Naive thymus-derived CD4-positive, alpha-beta T cell (primary cell): ENCODE measurements at regions of chr12 and their contacts with region 1.

Region 1: GRCh38 chr12:53675651-53676453 is at the start of gene ATP5MC2:
- DNase-seq: peak; percentile 92 to 98 (median 97)
- ATAC-seq: peak; percentile 97
- H3K4me3 ChIP-seq: peak within 1 kb of the TSS; percentile 64
- H3K4me3 Mint-ChIP-seq: peak within 1 kb of the TSS; percentile 91 to 99 (median 94)
- H3K27ac ChIP-seq: peak within 1 kb of the TSS; percentile 76
- H3K27ac Mint-ChIP-seq: peak within 1 kb of the TSS; percentile 91 to 98 (median 95)
- H3K4me1 ChIP-seq: peaks cover 7 to 21% of the 10 kb centered on the region in 2 donors
- H3K4me1 Mint-ChIP-seq: peaks cover 21 to 38% (median 32%) of the 10 kb centered on the region in 7 donors
- H3K27me3 ChIP-seq: no peaks in the 10 kb centered on the region
- H3K27me3 Mint-ChIP-seq: peaks cover 16 to 35% (median 21%) of the 10 kb centered on the region in 5 donors
- total RNA-seq, gene ATP5MC2: 237 to 332 (median 275) TPM

Region 2: GRCh38 chr12:53402871-53403270 is 273.0 kb before region 1 on chr12:
- CTCF ChIA-PET with region 1: no interaction called
- POLR2A ChIA-PET with region 1: no interaction called
- intact Hi-C with region 1: no loop called
- DNase-seq: no peak
- ATAC-seq: no peak
- H3K4me3 ChIP-seq: no peak overlapping the region
- H3K4me3 Mint-ChIP-seq: no peak overlapping the region
- H3K27ac ChIP-seq: no peak overlapping the region
- H3K27ac Mint-ChIP-seq: no peak overlapping the region
- H3K4me1 ChIP-seq: no peaks in the 10 kb centered on the region
- H3K4me1 Mint-ChIP-seq: peaks cover 4 to 17% (median 10%) of the 10 kb centered on the region in 7 donors
- H3K27me3 ChIP-seq: no peaks in the 10 kb centered on the region
- H3K27me3 Mint-ChIP-seq: no peaks in the 10 kb centered on the region

Region 3: GRCh38 chr12:53543539-53543938 is 132.3 kb before region 1 on chr12:
- CTCF ChIA-PET with region 1: interaction called, 37 read pairs
- POLR2A ChIA-PET with region 1: interaction called, 9 read pairs
- intact Hi-C with region 1: loop called (anchors 1 kb)
- DNase-seq: peak in 8 of 9 donors; percentile 37 to 78 (median 64)
- ATAC-seq: peak; percentile 94
- H3K4me3 ChIP-seq: no peak overlapping the region
- H3K4me3 Mint-ChIP-seq: peak overlapping the region in 5 of 10 donors; percentile 5 to 52 (median 33)
- H3K27ac ChIP-seq: peak overlapping the region; percentile 26
- H3K27ac Mint-ChIP-seq: peak overlapping the region; percentile 51 to 88 (median 76)
- H3K4me1 ChIP-seq: peaks cover 0 to 7% of the 10 kb centered on the region in 2 donors
- H3K4me1 Mint-ChIP-seq: peaks cover 0 to 25% (median 18%) of the 10 kb centered on the region in 7 donors
- H3K27me3 ChIP-seq: no peaks in the 10 kb centered on the region
- H3K27me3 Mint-ChIP-seq: no peaks in the 10 kb centered on the region

Region 4: GRCh38 chr12:53625946-53626701 is 49.7 kb before region 1 on chr12 and contains the start of gene ATF7:
- CTCF ChIA-PET with region 1: interaction called, 5 read pairs
- POLR2A ChIA-PET with region 1: interaction called, 10 read pairs
- intact Hi-C with region 1: loop called (anchors 1 kb)
- DNase-seq: peak; percentile 95 to 100 (median 99)
- ATAC-seq: peak; percentile 97
- H3K4me3 ChIP-seq: peak within 1 kb of the TSS; percentile 92
- H3K4me3 Mint-ChIP-seq: peak within 1 kb of the TSS; percentile 97 to 100 (median 98)
- H3K27ac ChIP-seq: peak within 1 kb of the TSS; percentile 83
- H3K27ac Mint-ChIP-seq: peak within 1 kb of the TSS; percentile 95 to 99 (median 97)
- H3K4me1 ChIP-seq: peaks cover 20 to 32% of the 10 kb centered on the region in 2 donors
- H3K4me1 Mint-ChIP-seq: peaks cover 30 to 55% (median 49%) of the 10 kb centered on the region in 7 donors
- H3K27me3 ChIP-seq: no peaks in the 10 kb centered on the region
- H3K27me3 Mint-ChIP-seq: peaks cover 0 to 6% (median 0%) of the 10 kb centered on the region in 5 donors
- total RNA-seq, gene ATF7: 21.9 to 39.5 (median 30.9) TPM

Region 5: DNA sequence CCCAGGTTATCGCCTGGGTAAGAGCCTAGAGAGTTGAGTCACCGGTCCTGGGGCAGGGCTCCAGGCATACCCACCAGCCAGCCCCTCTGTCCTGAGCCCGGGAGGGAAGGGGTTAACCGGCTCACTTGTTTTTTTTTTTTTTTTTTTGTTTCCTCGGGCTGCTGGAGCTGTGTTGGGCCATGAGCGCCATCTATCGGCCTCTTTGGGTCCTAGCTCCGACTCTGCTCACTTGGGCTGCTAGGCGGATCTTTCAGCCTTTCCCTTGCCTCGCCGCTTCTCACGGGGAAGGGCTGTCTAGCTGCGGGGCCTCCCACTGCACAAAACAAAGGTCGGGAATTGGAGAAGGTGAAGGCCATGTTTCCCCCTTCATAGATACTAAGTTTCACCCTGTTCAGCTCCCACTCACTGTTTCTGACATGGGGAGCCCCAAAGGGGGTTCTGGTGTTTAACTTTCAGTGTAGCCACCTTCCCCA is 515.7 kb after region 1 on chr12:
- CTCF ChIA-PET with region 1: interaction called, 3 read pairs
- POLR2A ChIA-PET with region 1: no interaction called
- intact Hi-C with region 1: loop called in 1 of 2 experiments (anchors 1 kb)
- DNase-seq: peak; percentile 58 to 85 (median 76)
- ATAC-seq: peak; percentile 82
- H3K4me3 ChIP-seq: no peak overlapping the region
- H3K4me3 Mint-ChIP-seq: peak overlapping the region in 3 of 10 donors; percentile 10 to 44 (median 32)
- H3K27ac ChIP-seq: no peak overlapping the region
- H3K27ac Mint-ChIP-seq: peak overlapping the region in 3 of 9 donors; percentile 3 to 48 (median 17)
- H3K4me1 ChIP-seq: peaks cover 8 to 9% of the 10 kb centered on the region in 2 donors
- H3K4me1 Mint-ChIP-seq: peaks cover 17 to 31% (median 27%) of the 10 kb centered on the region in 7 donors
- H3K27me3 ChIP-seq: peaks cover 0 to 6% of the 10 kb centered on the region in 2 donors
- H3K27me3 Mint-ChIP-seq: peaks cover 39 to 61% (median 46%) of the 10 kb centered on the region in 5 donors